GM13976 (cell line): ENCODE measurements at regions of chr22 and their contacts with region 1.

Region 1: GRCh38 chr22:16783930-16784354 is 41.3 kb downstream of the XKR3 start:
- DNase-seq: no peak
- CTCF ChIP-seq: no peak

Region 2: DNA sequence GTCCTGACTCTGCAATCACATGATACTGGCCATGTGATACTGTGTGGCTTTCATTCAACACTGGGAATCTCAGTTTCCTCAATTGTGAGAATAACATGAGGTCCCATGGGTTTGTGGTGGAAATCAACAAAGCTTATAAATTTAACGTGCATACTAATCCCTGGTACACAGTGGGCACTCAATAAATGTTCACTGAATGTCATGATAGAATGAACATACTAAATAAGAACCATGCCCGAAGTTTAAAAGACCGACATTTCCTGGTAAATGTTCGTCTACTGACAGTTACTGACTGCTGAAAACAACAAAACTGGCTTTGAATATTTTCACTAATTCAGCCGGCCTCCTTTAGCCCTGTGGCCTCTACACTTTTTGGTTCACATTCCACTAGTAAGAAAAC is 129.1 kb before region 1 on chr22:
- in situ Hi-C with region 1: no loop called
- DNase-seq: no peak
- CTCF ChIP-seq: no peak

Region 3: DNA sequence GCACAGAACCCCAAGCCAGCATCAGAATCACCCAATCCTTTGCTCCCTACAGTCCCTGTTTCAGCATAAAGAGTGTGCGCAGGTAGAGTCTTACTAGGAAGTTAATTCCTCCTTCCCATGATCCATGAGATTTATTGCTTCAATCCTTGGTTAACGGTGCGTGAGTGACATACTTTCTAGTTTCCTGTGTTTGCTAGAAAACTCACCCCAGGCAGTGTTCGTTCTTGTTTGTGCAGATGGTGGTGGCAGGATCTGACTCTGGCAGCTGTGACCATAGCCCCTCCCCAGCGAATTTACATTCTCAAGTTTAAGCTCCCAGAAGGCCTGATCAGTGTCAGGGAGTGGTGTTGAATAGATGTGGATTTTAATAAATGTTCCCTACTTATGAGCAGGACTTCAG is 84.6 kb before region 1 on chr22:
- in situ Hi-C with region 1: loop called (anchors 25 kb)
- DNase-seq: no peak
- CTCF ChIP-seq: no peak

Region 4: DNA sequence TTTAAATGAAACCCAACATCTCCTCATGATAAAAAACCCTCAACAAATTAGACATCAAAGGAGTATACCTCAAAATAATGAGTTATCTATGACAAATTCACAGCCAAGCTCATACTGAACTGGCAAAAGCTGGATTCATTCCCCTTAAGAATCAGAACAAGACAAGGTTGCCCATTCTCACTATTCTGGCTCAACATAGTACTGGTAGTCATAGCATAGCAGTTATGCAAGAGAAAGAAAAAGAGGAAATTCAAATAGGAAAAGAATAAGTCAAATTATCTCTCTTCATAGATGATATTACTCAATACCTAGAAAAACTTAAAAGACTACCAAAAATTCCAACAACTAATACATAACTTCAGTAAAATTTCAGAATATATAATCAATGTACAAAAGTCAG is 70.7 kb after region 1 on chr22:
- in situ Hi-C with region 1: no loop called
- DNase-seq: no peak
- CTCF ChIP-seq: no peak

Region 5: GRCh38 chr22:17043521-17043920 is 259.6 kb after region 1 on chr22:
- in situ Hi-C with region 1: no loop called
- DNase-seq: no peak
- CTCF ChIP-seq: no peak

Region 6: GRCh38 chr22:17057959-17058814 is 274.2 kb after region 1 on chr22:
- in situ Hi-C with region 1: loop called (anchors 25 kb)
- DNase-seq: peak; percentile 76
- CTCF ChIP-seq: peak; percentile 84